Activated naive CD4-positive, alpha-beta T cell treated with anti-CD3 and anti-CD28 coated beads for 36 hours (primary cell): ENCODE measurements at regions of chr14 and their contacts with region 1.

Region 1: GRCh38 chr14:84527706-84528105 is 1002.2 kb upstream of the FLRT2 start:
- DNase-seq: no peak
- H3K4me3 Mint-ChIP-seq: no peak overlapping the region
- H3K27ac Mint-ChIP-seq: no peak overlapping the region
- H3K4me1 Mint-ChIP-seq: no peaks in the 10 kb centered on the region
- H3K27me3 Mint-ChIP-seq: no peaks in the 10 kb centered on the region

Region 2: DNA sequence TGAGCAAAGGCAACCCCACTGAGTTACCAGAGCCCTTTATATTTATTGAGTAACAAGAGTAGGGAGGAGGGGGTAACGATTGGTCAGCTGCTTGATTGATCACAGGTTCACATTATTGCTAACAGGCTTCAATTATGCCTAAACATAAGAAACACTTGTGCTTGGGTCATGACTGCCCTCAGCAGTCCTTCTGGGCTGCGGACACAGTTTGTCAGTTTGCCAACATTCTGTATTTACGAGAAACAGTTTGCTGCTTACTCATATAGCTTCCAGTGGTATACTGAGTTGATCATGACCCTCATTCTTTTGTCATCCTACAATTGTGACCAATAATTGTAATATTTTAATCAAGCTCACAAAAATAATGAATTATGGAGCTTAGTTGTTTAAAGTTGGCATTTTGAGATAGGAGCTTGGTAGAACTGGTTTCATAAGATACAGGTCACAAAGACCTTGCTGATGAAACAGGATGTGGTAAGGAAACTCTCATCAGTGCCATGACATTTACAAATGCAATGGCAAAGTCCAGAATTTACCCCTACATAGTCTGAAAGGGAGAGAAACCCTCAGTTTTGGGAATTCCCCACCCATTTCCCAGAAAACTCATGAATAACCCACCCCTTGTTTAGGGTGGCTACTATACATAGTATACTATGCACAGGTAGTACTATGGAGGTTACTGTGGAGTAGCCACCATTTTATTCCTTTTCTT is 418.8 kb before region 1 on chr14:
- CTCF ChIA-PET with region 1: no interaction called
- intact Hi-C with region 1: loop called (anchors 5 kb)
- DNase-seq: no peak
- H3K4me3 Mint-ChIP-seq: no peak overlapping the region
- H3K27ac Mint-ChIP-seq: no peak overlapping the region
- H3K4me1 Mint-ChIP-seq: no peaks in the 10 kb centered on the region
- H3K27me3 Mint-ChIP-seq: no peaks in the 10 kb centered on the region